ENCODE measurements at regions of chr12 and their contacts with region 1.

Region 1: DNA sequence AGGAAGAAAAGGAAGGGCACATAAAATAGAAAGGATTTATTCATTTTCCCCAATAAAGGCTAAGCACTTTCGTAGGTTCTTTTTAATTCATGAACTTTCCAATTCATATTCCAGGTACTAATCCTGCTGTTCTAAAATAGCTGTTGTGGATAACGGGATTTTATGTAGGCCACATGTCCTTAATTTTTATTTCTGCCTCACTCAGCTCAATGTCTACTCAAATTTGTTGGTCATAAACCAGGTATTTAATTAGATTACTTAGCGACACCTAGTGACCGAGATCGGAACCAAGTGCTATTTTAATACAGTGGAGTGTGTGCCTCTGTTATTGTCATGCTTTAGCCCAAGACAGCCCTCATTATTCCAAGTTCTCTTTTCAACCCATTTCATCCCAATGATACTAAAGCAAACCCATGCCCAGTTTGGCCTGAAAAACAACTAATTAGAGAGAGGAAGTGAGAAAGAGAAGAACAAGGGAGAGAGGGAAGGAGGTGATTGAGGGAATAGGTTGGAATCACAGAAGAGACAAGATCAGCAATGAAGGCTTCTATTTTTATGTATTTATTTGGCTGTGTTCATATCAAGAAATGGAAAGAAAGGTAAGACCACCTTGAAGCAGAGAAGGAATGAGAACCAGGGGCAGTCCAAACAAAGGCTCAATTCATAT is 45.9 kb upstream of the IFNG-AS1 start:
- DNase-seq: peak; percentile 68
- ATAC-seq: peak; percentile 79
- H3K4me3 Mint-ChIP-seq: no peak overlapping the region
- H3K27ac Mint-ChIP-seq: no peak overlapping the region
- H3K4me1 Mint-ChIP-seq: no peaks in the 10 kb centered on the region
- H3K27me3 Mint-ChIP-seq: peaks cover 14% of the 10 kb centered on the region

Region 2: GRCh38 chr12:67161322-67161918 is 781.9 kb before region 1 on chr12:
- CTCF ChIA-PET with region 1: interaction called, 10 read pairs
- DNase-seq: peak; percentile 57
- ATAC-seq: no peak
- H3K4me3 Mint-ChIP-seq: no peak overlapping the region
- H3K27ac Mint-ChIP-seq: no peak overlapping the region
- H3K4me1 Mint-ChIP-seq: no peaks in the 10 kb centered on the region
- H3K27me3 Mint-ChIP-seq: peaks cover 14% of the 10 kb centered on the region

Region 3: DNA sequence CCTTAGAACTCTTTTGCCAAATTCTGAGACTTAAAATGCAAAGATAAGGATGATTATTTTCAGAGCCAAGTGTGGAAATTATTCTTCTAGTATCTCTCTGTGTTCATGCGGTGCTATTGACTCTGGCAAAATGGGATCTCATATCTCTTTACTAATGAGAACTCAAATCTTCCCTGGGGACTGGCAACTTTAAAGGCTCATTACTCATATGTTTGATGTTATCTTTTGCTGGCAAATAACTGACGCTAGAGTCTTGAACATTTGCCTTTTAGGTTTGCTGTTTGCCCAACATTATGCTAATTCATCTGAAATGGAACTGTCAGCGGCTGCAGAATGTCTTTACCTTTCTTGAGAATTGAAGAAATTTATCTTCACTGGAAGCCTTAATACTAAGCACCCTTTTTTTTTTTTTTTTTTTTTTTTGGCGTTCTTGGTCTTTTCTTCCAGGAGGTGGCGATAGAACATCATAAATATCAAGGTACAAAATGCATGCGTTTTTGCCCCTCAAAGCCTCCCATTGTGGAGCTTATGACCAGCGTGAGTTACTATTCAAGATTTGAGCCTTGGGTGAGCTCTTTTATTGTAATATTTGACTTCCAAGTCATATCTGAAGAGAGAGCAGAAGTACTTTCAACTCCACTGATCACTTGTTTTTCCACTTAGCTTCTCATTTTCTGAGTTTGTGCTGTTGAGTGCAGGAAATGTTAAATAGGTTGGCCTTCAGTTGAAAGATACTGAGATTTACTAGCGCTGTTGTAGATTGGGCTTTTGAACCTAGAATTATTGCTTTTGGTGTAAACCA is 587.6 kb before region 1 on chr12:
- CTCF ChIA-PET with region 1: interaction called, 27 read pairs
- DNase-seq: no peak
- ATAC-seq: peak; percentile 57
- H3K4me3 Mint-ChIP-seq: no peak overlapping the region
- H3K27ac Mint-ChIP-seq: no peak overlapping the region
- H3K4me1 Mint-ChIP-seq: peaks cover 21% of the 10 kb centered on the region
- H3K27me3 Mint-ChIP-seq: no peaks in the 10 kb centered on the region

Region 4: GRCh38 chr12:67648521-67649260 is 294.7 kb before region 1 on chr12 and contains the start of gene DYRK2:
- CTCF ChIA-PET with region 1: interaction called, 17 read pairs
- DNase-seq: peak; percentile 77
- ATAC-seq: peak; percentile 70
- H3K4me3 Mint-ChIP-seq: peak within 1 kb of the TSS; percentile 92
- H3K27ac Mint-ChIP-seq: peak within 1 kb of the TSS; percentile 87
- H3K4me1 Mint-ChIP-seq: peaks cover 30% of the 10 kb centered on the region
- H3K27me3 Mint-ChIP-seq: peaks cover 10% of the 10 kb centered on the region
- total RNA-seq, gene DYRK2: 27.7 to 46.6 TPM

Measured in activated CD8-positive, alpha-beta memory T cell treated with anti-CD3 and anti-CD28 coated beads, Interleukin-2, amount 10 ng/mL, durations not matched to agents 7 days and 5 days (primary cell).